ENCODE measurements at regions of chr13 and their contacts with region 1.

Region 1: DNA sequence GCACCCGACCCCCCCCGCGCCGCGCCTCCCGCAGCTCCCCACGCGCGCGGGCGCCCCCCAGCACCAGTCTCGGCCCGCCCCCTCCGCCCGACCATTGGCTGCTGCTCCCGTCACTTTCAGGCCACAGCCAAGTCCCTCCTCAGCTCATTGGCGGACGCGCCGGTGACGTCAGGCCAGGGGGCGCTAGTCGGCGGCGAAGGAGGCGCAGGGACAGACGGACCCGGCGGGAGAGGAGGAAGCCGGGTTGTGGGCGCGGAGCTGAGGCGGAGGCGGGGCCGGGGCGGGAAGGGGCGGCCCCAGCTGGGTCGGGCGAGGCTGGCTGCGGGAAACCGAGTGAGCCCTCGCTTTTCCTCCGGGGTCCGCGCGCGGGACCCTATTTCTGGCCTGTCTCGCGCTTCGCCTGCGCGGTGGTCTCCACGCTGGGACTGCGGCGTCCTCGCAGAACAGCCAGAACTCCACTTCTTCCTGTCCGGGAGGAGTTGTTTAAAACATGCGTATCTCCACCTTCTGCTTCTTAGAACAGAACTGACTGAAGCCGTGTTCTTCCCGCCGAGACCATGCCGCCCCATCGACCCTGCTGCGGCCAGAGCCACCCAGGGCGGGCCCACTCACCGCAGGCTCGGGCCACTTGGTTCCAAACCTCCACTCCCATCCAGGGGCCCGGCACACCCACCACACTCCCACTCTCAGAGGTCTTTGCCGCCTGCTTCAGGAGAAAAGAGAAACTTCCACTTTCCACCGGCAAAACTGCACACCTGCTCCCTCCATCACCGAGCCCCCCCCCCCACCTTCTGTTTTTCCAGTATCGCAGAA is 459 bp upstream of the TMTC4 start:
- DNase-seq: peak; percentile 98 to 100 (median 99)
- H3K4me3 ChIP-seq: peak overlapping the region; percentile 53 to 74
- H3K4me3 Mint-ChIP-seq: peak overlapping the region; percentile 83 to 95 (median 91)
- H3K27ac ChIP-seq: peak overlapping the region; percentile 73
- H3K27ac Mint-ChIP-seq: peak overlapping the region; percentile 83 to 94 (median 89)
- H3K4me1 ChIP-seq: peaks cover 16% of the 10 kb centered on the region
- H3K4me1 Mint-ChIP-seq: peaks cover 16 to 44% (median 28%) of the 10 kb centered on the region in 4 donors
- H3K27me3 ChIP-seq: no peaks in the 10 kb centered on the region
- H3K27me3 Mint-ChIP-seq: no peaks in the 10 kb centered on the region

Region 2: DNA sequence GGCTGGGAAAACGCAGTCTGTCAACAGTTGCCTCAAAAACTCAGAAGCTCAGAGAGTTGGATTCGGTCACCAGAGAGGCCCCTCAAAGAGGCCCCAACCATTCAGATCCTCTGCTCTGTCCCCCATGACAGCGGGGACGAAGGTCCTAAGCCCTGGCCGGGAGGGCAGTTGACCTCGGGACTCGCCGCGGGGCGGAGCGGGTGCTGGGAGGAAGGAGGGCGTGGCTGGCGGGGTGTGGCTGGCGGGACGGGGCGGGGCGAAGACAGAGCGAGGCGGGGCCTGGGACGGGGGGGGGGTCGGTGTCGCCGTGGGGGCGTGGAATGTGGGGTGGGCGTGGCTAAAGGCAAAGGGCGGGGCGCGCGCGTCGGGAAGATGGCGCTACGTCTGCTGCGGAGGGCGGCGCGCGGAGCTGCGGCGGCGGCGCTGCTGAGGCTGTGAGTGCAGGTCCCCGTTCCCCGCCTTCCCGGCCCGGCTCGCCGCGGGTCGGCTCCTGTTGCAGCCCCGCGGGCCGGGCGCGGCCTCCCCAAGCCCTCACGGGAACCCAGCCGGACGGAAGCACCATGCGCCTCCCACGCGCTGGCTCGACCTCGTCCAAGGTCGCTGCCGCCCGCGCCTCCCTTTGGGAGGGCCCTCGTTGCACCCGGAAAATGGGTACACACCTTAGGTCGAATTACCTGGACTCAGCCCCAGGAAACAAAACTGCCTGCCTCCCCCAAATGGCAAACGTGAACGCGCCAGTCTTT is 1068.6 kb before region 1 on chr13:
- CTCF ChIA-PET with region 1: no interaction called
- POLR2A ChIA-PET with region 1: interaction called, 4 read pairs
- intact Hi-C with region 1: loop called (anchors 1 kb)
- DNase-seq: peak; percentile 87 to 90 (median 89)
- H3K4me3 ChIP-seq: peak within 1 kb of the TSS; percentile 53 to 78
- H3K4me3 Mint-ChIP-seq: peak within 1 kb of the TSS; percentile 88 to 97 (median 90)
- H3K27ac ChIP-seq: peak within 1 kb of the TSS; percentile 71
- H3K27ac Mint-ChIP-seq: peak within 1 kb of the TSS; percentile 91 to 96 (median 95)
- H3K4me1 ChIP-seq: peaks cover 35% of the 10 kb centered on the region
- H3K4me1 Mint-ChIP-seq: peaks cover 28 to 59% (median 46%) of the 10 kb centered on the region in 4 donors
- H3K27me3 ChIP-seq: no peaks in the 10 kb centered on the region
- H3K27me3 Mint-ChIP-seq: no peaks in the 10 kb centered on the region

Region 3: GRCh38 chr13:100588331-100589177 is 86.5 kb before region 1 on chr13 and contains the start of gene GGACT:
- CTCF ChIA-PET with region 1: interaction called, 8 read pairs
- POLR2A ChIA-PET with region 1: interaction called, 27 read pairs
- intact Hi-C with region 1: loop called (anchors 1 kb)
- DNase-seq: peak; percentile 77 to 87 (median 83)
- H3K4me3 ChIP-seq: peak within 1 kb of the TSS; percentile 57 to 77
- H3K4me3 Mint-ChIP-seq: peak within 1 kb of the TSS; percentile 82 to 90 (median 86)
- H3K27ac ChIP-seq: peak within 1 kb of the TSS; percentile 74
- H3K27ac Mint-ChIP-seq: peak within 1 kb of the TSS; percentile 83 to 95 (median 91)
- H3K4me1 ChIP-seq: peaks cover 42% of the 10 kb centered on the region
- H3K4me1 Mint-ChIP-seq: peaks cover 34 to 50% (median 41%) of the 10 kb centered on the region in 4 donors
- H3K27me3 ChIP-seq: no peaks in the 10 kb centered on the region
- H3K27me3 Mint-ChIP-seq: no peaks in the 10 kb centered on the region
- total RNA-seq, gene GGACT: 6.7 to 9.6 TPM

Region 4: DNA sequence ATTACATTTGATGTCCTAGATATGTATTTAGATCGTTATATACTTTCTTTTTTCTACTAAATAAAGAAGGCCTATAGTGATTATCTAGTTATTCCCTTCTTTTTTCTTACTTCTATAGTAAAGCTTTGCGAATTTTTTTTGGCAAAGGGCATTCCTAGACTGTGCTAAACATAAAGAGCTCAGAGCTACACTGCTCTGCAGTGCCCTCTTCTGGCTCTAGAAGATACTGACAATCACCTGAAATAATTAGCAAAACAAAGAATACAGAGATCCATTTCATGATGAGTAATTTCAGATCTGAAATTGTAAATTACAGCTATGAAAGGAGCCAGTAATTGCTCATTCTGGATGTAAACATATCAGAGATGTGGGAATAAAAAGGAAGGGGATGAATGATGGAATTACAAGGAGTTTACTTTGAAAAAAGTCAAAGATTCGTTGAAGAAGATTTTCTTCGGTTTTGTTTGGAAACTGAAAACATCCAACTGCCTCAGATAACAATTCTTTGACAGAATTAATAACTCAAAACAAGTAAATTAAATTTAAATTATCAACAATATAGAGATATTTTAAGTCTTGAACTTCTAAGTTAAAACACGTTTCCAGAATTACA is 452.8 kb after region 1 on chr13:
- CTCF ChIA-PET with region 1: no interaction called
- POLR2A ChIA-PET with region 1: no interaction called
- intact Hi-C with region 1: loop called (anchors 5 kb)
- DNase-seq: peak in 4 of 5 donors; percentile 17 to 41 (median 26)
- H3K4me3 ChIP-seq: no peak overlapping the region
- H3K4me3 Mint-ChIP-seq: no peak overlapping the region
- H3K27ac ChIP-seq: no peak overlapping the region
- H3K27ac Mint-ChIP-seq: no peak overlapping the region
- H3K4me1 ChIP-seq: no peaks in the 10 kb centered on the region
- H3K4me1 Mint-ChIP-seq: peaks cover 0 to 3% (median 1%) of the 10 kb centered on the region in 4 donors
- H3K27me3 ChIP-seq: no peaks in the 10 kb centered on the region
- H3K27me3 Mint-ChIP-seq: peaks cover 2 to 3% of the 10 kb centered on the region in 2 donors